A673 (cell line): ENCODE measurements at regions of chr2 and their contacts with region 1.

Region 1: GRCh38 chr2:216596236-216596979 is 36.8 kb upstream of the IGFBP2 start:
- DNase-seq: peak; percentile 99
- H3K4me3 ChIP-seq: peak overlapping the region; percentile 24
- H3K27ac ChIP-seq: peak overlapping the region; percentile 94
- H3K4me1 ChIP-seq: peaks cover 35% of the 10 kb centered on the region
- H3K27me3 ChIP-seq: no peaks in the 10 kb centered on the region
- CTCF ChIP-seq: no peak

Region 2: GRCh38 chr2:215711471-215712034 is 884.9 kb before region 1 on chr2:
- CTCF ChIA-PET with region 1: no interaction called
- POLR2A ChIA-PET with region 1: no interaction called
- intact Hi-C with region 1: no loop called
- DNase-seq: no peak
- H3K4me3 ChIP-seq: no peak overlapping the region
- H3K27ac ChIP-seq: peak overlapping the region; percentile 74
- H3K4me1 ChIP-seq: peaks cover 31% of the 10 kb centered on the region
- H3K27me3 ChIP-seq: no peaks in the 10 kb centered on the region
- CTCF ChIP-seq: no peak

Region 3: DNA sequence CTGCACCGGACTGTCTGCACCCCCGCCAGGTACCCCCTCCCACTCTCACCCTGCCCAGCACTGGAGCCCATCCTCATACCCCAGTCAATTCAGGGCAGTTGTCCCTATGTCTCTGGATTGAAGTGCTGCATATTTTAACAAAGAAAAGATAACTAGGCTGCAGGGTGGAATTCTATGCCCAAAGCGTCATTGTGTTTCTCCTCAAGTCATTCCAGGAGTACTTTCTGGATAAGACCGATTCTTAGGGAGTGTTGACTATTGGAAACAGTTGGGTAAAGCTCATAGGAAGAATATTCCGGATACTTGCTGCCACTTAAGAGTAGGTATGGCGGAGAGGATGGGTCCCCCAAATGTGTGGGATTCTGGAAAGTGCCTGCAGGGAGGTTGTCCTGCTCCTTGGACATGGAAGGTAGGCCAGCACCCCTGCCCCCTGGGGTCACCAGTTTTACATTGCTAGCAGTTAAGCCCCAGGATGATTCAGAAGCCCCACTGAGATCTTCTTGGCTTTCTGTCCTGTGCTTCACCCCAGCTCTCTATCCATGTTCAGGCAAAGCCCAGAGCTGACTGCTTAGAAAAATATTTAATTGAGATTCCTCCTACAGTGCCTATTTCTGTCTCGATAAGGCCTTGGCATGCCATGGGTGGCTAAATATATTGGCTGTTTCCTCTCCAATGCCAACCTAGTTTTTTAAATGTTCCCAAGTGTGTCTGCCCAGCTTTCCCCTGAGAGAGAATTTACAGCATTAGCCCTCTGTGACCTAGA is 49.6 kb before region 1 on chr2:
- CTCF ChIA-PET with region 1: no interaction called
- POLR2A ChIA-PET with region 1: no interaction called
- intact Hi-C with region 1: loop called (anchors 5 kb)
- DNase-seq: peak; percentile 24
- H3K4me3 ChIP-seq: no peak overlapping the region
- H3K27ac ChIP-seq: peak overlapping the region; percentile 91
- H3K4me1 ChIP-seq: peaks cover 46% of the 10 kb centered on the region
- H3K27me3 ChIP-seq: no peaks in the 10 kb centered on the region
- CTCF ChIP-seq: no peak

Region 4: GRCh38 chr2:216619411-216620393 is 23.3 kb after region 1 on chr2:
- CTCF ChIA-PET with region 1: no interaction called
- POLR2A ChIA-PET with region 1: interaction called, 4 read pairs
- intact Hi-C with region 1: loop called (anchors 2 kb)
- DNase-seq: peak; percentile 96
- H3K4me3 ChIP-seq: peak overlapping the region; percentile 30
- H3K27ac ChIP-seq: peak overlapping the region; percentile 98
- H3K4me1 ChIP-seq: peaks cover 65% of the 10 kb centered on the region
- H3K27me3 ChIP-seq: no peaks in the 10 kb centered on the region
- CTCF ChIP-seq: no peak

Region 5: DNA sequence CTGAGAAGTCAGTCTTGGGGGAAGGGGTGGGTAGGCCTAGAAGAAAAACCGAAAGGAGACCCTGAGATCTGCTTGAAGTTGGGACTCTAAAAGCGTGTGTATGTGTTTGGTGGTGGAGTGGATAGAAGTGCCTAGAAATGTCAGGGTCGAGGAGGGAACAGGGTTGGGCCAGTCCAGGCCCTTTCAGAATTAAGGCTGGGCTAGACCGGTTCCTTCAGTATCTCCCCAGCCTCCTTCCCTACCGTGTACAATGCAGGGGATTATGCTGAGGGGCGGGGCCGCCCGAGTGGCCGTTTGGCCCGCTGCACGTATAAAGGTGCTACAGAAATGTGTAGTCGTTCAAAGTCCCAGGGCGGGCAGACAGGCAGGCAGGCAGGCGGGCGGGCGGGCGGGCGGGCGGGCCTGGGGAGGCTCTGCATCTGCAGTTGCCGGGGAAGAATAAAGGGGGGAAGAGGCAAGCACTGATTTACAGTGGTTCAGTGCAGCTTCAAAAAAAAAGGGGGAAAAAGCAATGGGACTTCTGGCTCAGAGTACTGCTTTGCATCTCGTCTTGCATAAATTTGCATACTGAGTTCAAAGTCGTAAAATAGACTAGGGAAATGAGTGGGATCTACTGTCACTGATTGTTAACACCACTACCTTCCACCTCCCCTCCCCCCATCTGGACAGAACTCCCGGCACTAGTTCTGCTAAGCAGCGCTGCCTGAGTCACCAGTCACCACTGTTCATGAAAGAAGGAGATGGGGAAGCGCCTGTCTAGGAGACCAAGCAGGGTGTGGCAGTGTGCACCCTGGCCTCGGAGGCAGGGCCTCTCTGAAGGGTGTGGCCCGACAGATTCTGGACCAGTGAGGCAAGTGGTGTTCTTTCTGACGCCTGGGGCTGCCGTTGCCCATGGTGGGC is 40.4 kb after region 1 on chr2:
- CTCF ChIA-PET with region 1: interaction called, 4 read pairs
- POLR2A ChIA-PET with region 1: no interaction called
- intact Hi-C with region 1: loop called (anchors 1 kb)
- DNase-seq: peak; percentile 88
- H3K4me3 ChIP-seq: peak overlapping the region; percentile 99
- H3K27ac ChIP-seq: peak overlapping the region; percentile 93
- H3K4me1 ChIP-seq: peaks cover 21% of the 10 kb centered on the region
- H3K27me3 ChIP-seq: no peaks in the 10 kb centered on the region
- CTCF ChIP-seq: no peak

Region 6: GRCh38 chr2:216666461-216667233 is 70.2 kb after region 1 on chr2:
- CTCF ChIA-PET with region 1: no interaction called
- POLR2A ChIA-PET with region 1: no interaction called
- intact Hi-C with region 1: loop called (anchors 5 kb)
- DNase-seq: peak; percentile 82
- H3K4me3 ChIP-seq: no peak overlapping the region
- H3K27ac ChIP-seq: no peak overlapping the region
- H3K4me1 ChIP-seq: peaks cover 12% of the 10 kb centered on the region
- H3K27me3 ChIP-seq: no peaks in the 10 kb centered on the region
- CTCF ChIP-seq: peak; percentile 99

Region 7: GRCh38 chr2:216799873-216800431 is 203.5 kb after region 1 on chr2:
- CTCF ChIA-PET with region 1: no interaction called
- POLR2A ChIA-PET with region 1: no interaction called
- intact Hi-C with region 1: no loop called
- DNase-seq: no peak
- H3K4me3 ChIP-seq: no peak overlapping the region
- H3K27ac ChIP-seq: no peak overlapping the region
- H3K4me1 ChIP-seq: no peaks in the 10 kb centered on the region
- H3K27me3 ChIP-seq: no peaks in the 10 kb centered on the region
- CTCF ChIP-seq: no peak

Region 8: GRCh38 chr2:217193431-217194340 is 597.3 kb after region 1 on chr2:
- CTCF ChIA-PET with region 1: no interaction called
- POLR2A ChIA-PET with region 1: no interaction called
- intact Hi-C with region 1: no loop called
- DNase-seq: no peak
- H3K4me3 ChIP-seq: no peak overlapping the region
- H3K27ac ChIP-seq: no peak overlapping the region
- H3K4me1 ChIP-seq: no peaks in the 10 kb centered on the region
- H3K27me3 ChIP-seq: no peaks in the 10 kb centered on the region
- CTCF ChIP-seq: no peak